Activated naive CD8-positive, alpha-beta T cell treated with anti-CD3 and anti-CD28 coated beads, Interleukin-2, amount 10 ng/mL, durations not matched to agents 7 days and 5 days (primary cell): ENCODE measurements at regions of chr1 and their contacts with region 1.

Region 1: GRCh38 chr1:42766741-42767509 is at the starts of genes C1orf50 and P3H1:
- DNase-seq: peak; percentile 99
- ATAC-seq: peak; percentile 94
- H3K4me3 Mint-ChIP-seq: no peak within 1 kb of the TSS
- H3K27ac Mint-ChIP-seq: peak within 1 kb of the TSS; percentile 95
- H3K4me1 Mint-ChIP-seq: peaks cover 22% of the 10 kb centered on the region
- H3K27me3 Mint-ChIP-seq: no peaks in the 10 kb centered on the region
- total RNA-seq, gene C1orf50: 10.4 to 10.9 TPM
- total RNA-seq, gene P3H1: 44.1 to 49.9 TPM

Region 2: DNA sequence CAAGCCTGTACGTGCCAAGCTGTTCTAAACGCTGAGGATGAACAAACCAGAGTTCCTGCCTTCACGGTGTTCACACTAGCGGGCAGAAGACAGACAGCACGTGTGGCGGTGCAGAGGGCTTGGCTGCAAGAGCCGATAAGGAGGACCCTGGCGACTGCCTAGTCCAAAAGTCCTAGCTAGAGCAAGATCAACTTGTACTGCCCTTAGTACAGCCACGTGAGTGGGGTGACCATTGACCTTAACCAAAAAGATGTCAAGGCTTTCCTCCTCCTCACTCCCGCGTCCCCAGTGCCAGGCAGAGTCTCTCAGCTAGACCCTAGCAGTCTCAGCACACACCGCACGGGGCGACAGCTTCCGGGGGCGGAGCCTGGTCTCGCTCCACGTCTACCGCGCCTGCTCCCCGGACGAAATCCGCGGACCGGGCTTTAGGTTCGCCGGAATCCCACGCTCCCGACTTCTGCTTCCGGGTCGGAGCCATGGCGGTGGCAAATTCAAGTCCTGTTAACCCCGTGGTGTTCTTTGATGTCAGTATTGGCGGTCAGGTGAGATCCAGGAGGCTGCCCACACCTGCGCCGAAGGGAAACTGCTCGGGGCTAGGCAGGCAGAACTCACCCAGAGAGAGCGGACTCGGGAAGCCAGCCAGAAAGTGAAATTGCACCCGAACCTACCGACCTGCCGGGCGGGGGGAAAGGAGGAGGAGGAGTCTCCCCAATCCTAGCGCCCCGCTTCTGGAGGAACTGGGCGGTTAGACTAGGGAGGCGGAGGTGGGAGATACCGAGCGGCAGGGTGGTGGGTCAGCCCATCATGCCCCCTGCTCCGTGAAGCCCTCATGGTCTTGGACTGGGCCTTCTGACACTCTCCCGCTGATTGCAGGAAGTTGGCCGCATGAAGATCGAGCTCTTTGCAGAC is 108.7 kb before region 1 on chr1 and contains the start of gene PPIH:
- POLR2A ChIA-PET with region 1: interaction called, 13 read pairs
- DNase-seq: peak; percentile 94
- ATAC-seq: peak; percentile 97
- H3K4me3 Mint-ChIP-seq: peak within 1 kb of the TSS; percentile 94
- H3K27ac Mint-ChIP-seq: peak within 1 kb of the TSS; percentile 94
- H3K4me1 Mint-ChIP-seq: peaks cover 34% of the 10 kb centered on the region
- H3K27me3 Mint-ChIP-seq: no peaks in the 10 kb centered on the region
- total RNA-seq, gene PPIH: 90.3 to 98.6 TPM

Region 3: GRCh38 chr1:42777852-42778251 is 10.9 kb after region 1 on chr1:
- POLR2A ChIA-PET with region 1: interaction called, 37 read pairs
- DNase-seq: no peak
- ATAC-seq: no peak
- H3K4me3 Mint-ChIP-seq: no peak overlapping the region
- H3K27ac Mint-ChIP-seq: no peak overlapping the region
- H3K4me1 Mint-ChIP-seq: peaks cover 16% of the 10 kb centered on the region
- H3K27me3 Mint-ChIP-seq: no peaks in the 10 kb centered on the region

Region 4: GRCh38 chr1:42816585-42817434 is 49.9 kb after region 1 on chr1 and contains the starts of genes ERMAP and SVBP:
- POLR2A ChIA-PET with region 1: interaction called, 30 read pairs
- DNase-seq: peak; percentile 99
- ATAC-seq: peak; percentile 87
- H3K4me3 Mint-ChIP-seq: peak within 1 kb of the TSS; percentile 86
- H3K27ac Mint-ChIP-seq: peak within 1 kb of the TSS; percentile 87
- H3K4me1 Mint-ChIP-seq: peaks cover 20% of the 10 kb centered on the region
- H3K27me3 Mint-ChIP-seq: peaks cover 2% of the 10 kb centered on the region
- total RNA-seq, gene ERMAP: 3.9 to 5.0 TPM
- total RNA-seq, gene SVBP: 15.8 to 18.1 TPM

Region 5: GRCh38 chr1:42924082-42924850 is 157.3 kb after region 1 on chr1:
- POLR2A ChIA-PET with region 1: interaction called, 13 read pairs
- DNase-seq: peak; percentile 93
- ATAC-seq: peak; percentile 91
- H3K4me3 Mint-ChIP-seq: peak overlapping the region; percentile 83
- H3K27ac Mint-ChIP-seq: peak overlapping the region; percentile 87
- H3K4me1 Mint-ChIP-seq: peaks cover 40% of the 10 kb centered on the region
- H3K27me3 Mint-ChIP-seq: no peaks in the 10 kb centered on the region